Activated naive CD4-positive, alpha-beta T cell treated with anti-CD3 and anti-CD28 coated beads for 36 hours (primary cell): ENCODE measurements at regions of chr9 and their contacts with region 1.

Region 1: DNA sequence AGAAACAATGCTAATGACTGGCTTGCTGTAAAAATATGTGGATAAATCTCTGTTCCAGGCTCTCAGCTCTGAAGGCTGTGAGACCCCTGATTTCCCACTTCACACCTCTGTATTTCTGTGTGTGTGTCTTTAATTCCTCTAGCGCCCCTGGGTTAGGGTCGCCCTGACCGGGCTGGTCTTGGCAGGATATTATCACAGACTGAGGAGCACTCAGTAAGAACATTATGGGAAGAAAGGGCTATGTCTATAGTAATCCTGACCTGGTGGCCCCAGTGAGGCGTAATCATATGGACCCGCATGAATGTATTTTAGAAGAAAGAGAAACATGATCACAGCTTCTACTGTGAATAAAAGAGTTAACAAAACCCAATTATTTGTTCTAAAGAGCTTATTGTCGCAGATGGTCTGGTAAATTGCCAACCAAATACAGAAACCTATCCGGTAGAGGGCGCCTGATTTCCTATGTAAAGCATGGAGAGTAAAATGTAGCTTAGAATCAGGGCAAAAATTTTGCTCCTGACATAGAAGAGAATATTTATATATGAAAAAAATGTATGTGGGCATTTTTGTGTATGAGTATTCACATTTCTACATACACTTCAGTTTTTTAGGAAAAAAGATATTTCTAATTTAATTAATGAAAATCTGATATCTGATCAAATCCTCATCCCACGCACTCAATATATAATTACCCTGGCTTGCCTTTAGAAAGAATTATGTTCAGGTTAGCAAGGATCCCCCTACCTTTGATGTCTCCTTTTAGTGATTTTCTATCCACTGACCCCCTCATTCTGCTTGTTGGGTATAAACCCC is 5.8 kb upstream of the IFNA1 start:
- DNase-seq: peak; percentile 72
- H3K4me3 Mint-ChIP-seq: no peak overlapping the region
- H3K27ac Mint-ChIP-seq: no peak overlapping the region
- H3K4me1 Mint-ChIP-seq: no peaks in the 10 kb centered on the region
- H3K27me3 Mint-ChIP-seq: peaks cover 9% of the 10 kb centered on the region

Region 2: DNA sequence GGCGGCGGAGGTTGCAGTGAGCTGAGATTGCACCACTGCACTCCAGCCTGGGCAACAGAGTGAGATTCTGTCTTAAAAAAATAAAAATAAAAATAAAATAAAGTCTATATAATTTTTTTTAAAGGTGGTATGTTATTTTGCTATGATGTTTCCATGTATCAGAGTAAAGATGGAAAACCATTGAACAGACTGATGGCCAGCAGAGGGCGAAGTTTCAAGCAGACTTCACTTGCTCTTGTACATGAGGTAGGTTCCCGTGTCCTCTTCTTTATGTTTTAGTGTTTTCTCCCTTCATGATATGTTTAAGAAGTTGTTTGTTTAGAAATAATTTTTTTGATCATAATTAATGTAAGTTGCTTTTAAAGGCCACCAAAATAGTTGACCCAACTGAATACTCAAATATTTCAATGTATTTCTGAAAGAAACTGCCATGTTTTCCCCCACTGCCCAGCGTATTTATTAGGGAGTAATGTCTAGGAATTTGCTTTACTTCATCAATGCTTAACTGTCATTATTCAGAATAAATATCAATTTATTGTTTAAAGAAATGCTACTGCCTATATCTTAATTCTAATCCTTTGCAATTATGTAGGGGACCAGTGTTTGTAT is 549.3 kb before region 1 on chr9:
- CTCF ChIA-PET with region 1: no interaction called
- intact Hi-C with region 1: no loop called
- DNase-seq: peak; percentile 78
- H3K4me3 Mint-ChIP-seq: no peak overlapping the region
- H3K27ac Mint-ChIP-seq: no peak overlapping the region
- H3K4me1 Mint-ChIP-seq: no peaks in the 10 kb centered on the region
- H3K27me3 Mint-ChIP-seq: no peaks in the 10 kb centered on the region

Region 3: GRCh38 chr9:21326526-21327139 is 107.8 kb before region 1 on chr9:
- CTCF ChIA-PET with region 1: interaction called, 13 read pairs
- intact Hi-C with region 1: no loop called
- DNase-seq: no peak
- H3K4me3 Mint-ChIP-seq: no peak overlapping the region
- H3K27ac Mint-ChIP-seq: no peak overlapping the region
- H3K4me1 Mint-ChIP-seq: peaks cover 41% of the 10 kb centered on the region
- H3K27me3 Mint-ChIP-seq: no peaks in the 10 kb centered on the region